CD8-positive, alpha-beta memory T cell (primary cell): ENCODE measurements at regions of chr9 and their contacts with region 1.

Region 1: GRCh38 chr9:15552636-15553527 is at the start of gene CCDC171:
- DNase-seq: peak; percentile 77 to 90 (median 86)
- H3K4me3 ChIP-seq: peak within 1 kb of the TSS; percentile 98
- H3K4me3 Mint-ChIP-seq: peak within 1 kb of the TSS; percentile 87 to 97 (median 93)
- H3K27ac ChIP-seq: peak within 1 kb of the TSS; percentile 40
- H3K27ac Mint-ChIP-seq: peak within 1 kb of the TSS; percentile 45 to 94 (median 86)
- H3K4me1 ChIP-seq: peaks cover 7% of the 10 kb centered on the region
- H3K4me1 Mint-ChIP-seq: peaks cover 12 to 20% (median 14%) of the 10 kb centered on the region in 3 donors
- H3K27me3 ChIP-seq: no peaks in the 10 kb centered on the region
- H3K27me3 Mint-ChIP-seq: peaks cover 0 to 3% of the 10 kb centered on the region in 2 donors
- total RNA-seq, gene CCDC171: 1.8 to 2.3 TPM

Region 2: DNA sequence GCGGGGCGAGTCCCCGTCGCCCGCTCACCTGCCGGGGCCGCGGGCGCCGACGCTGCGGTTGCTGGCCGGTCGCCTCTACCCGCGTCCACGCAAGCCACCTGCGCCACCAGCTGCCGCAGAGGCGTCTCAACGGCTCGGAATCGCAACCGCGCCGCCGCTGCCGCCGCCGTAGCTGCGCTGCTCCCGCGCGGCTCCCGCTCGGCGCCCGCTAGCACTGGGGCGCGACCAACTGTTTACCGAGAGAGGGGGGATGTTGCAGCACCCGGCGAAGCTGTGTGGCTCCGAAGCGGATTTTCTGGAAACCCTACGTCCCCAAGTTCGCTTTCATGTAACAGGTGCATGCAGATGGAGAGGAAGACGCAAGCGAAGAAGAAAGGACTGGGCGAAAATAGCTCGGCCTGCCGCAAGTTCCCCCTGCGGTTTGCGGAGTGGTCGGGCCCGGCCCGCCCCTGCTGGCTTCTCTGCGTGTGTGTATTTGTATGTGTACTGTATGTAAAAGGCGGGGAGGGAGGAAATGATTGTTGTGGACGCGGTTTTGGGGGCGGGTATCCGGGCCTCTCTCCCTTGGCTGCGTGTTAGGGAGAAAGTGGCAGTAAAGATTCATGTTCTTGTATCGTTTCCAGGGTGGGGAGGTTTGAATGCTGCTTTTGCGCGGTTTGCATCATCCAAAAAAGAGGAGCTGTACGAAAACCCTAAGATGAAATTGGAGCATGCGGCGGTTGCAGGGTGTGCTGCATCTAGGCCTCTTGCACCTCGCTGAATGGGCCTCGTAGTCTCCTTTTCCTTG is 41.9 kb before region 1 on chr9 and contains the start of gene PSIP1:
- CTCF ChIA-PET with region 1: interaction called, 5 read pairs
- POLR2A ChIA-PET with region 1: interaction called, 39 read pairs
- DNase-seq: peak; percentile 80 to 94 (median 91)
- H3K4me3 ChIP-seq: peak within 1 kb of the TSS; percentile 78
- H3K4me3 Mint-ChIP-seq: peak within 1 kb of the TSS; percentile 96 to 98 (median 97)
- H3K27ac ChIP-seq: peak within 1 kb of the TSS; percentile 87
- H3K27ac Mint-ChIP-seq: peak within 1 kb of the TSS; percentile 89 to 100 (median 99)
- H3K4me1 ChIP-seq: peaks cover 50% of the 10 kb centered on the region
- H3K4me1 Mint-ChIP-seq: peaks cover 51 to 59% (median 55%) of the 10 kb centered on the region in 3 donors
- H3K27me3 ChIP-seq: no peaks in the 10 kb centered on the region
- H3K27me3 Mint-ChIP-seq: peaks cover 0 to 3% of the 10 kb centered on the region in 2 donors
- total RNA-seq, gene PSIP1: 82.2 to 86.3 TPM

Region 3: GRCh38 chr9:15541872-15542271 is 11.0 kb before region 1 on chr9:
- CTCF ChIA-PET with region 1: interaction called, 10 read pairs
- POLR2A ChIA-PET with region 1: no interaction called
- DNase-seq: no peak
- H3K4me3 ChIP-seq: no peak overlapping the region
- H3K4me3 Mint-ChIP-seq: no peak overlapping the region
- H3K27ac ChIP-seq: no peak overlapping the region
- H3K27ac Mint-ChIP-seq: no peak overlapping the region
- H3K4me1 ChIP-seq: no peaks in the 10 kb centered on the region
- H3K4me1 Mint-ChIP-seq: no peaks in the 10 kb centered on the region
- H3K27me3 ChIP-seq: no peaks in the 10 kb centered on the region
- H3K27me3 Mint-ChIP-seq: peaks cover 1 to 24% of the 10 kb centered on the region in 2 donors